MCF 10A (cell line): ENCODE measurements at regions of chr14 and their contacts with region 1.

Region 1: GRCh38 chr14:74618078-74618952 is 6.3 kb upstream of the LTBP2 start:
- DNase-seq: peak; percentile 92
- H3K4me3 Mint-ChIP-seq: no peak overlapping the region
- H3K27ac Mint-ChIP-seq: peak overlapping the region; percentile 39
- H3K4me1 Mint-ChIP-seq: peaks cover 71% of the 10 kb centered on the region
- H3K27me3 Mint-ChIP-seq: no peaks in the 10 kb centered on the region
- CTCF ChIP-seq: no peak

Region 2: GRCh38 chr14:74638066-74638465 is 19.8 kb after region 1 on chr14:
- CTCF ChIA-PET with region 1: interaction called, 3 read pairs
- POLR2A ChIA-PET with region 1: interaction called, 13 read pairs
- intact Hi-C with region 1: no loop called
- DNase-seq: no peak
- H3K4me3 Mint-ChIP-seq: no peak overlapping the region
- H3K27ac Mint-ChIP-seq: no peak overlapping the region
- H3K4me1 Mint-ChIP-seq: no peaks in the 10 kb centered on the region
- H3K27me3 Mint-ChIP-seq: no peaks in the 10 kb centered on the region
- CTCF ChIP-seq: no peak

Region 3: DNA sequence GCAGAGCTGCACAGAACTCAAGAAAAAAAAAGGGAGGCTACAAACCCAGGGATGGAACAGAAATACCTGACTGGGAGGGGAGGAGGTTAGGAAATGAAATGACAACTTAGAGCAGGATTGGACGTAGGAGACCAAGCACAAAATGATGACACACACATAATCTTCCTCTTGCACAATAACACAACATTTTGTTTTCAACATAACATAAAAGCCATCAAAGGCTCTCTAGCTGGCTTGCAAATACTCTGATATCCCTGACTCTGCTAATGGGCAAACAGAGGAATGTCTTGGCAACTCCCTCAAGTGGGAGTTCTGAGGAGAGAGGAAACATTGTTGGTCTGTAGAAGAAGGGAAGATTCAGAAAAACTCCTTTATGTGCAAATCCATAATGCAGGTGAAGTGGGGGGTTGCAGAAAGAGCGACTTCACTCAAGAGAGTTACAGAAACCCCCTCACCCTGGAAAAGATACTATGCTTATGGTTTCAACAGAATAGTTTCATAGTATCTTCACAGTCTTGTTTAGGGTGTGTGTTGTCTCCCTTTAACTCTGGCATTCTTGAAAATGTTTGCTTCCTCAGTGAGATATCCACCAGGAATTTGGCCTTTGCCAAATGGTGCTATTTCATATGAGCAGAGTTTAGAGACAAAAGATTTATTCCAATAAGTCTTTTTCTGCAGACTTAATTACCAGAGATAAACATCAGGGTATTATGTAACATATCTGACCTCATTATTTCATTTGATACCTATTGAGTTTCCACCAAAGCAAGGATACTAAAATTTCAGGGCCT is 37.5 kb after region 1 on chr14:
- CTCF ChIA-PET with region 1: interaction called, 13 read pairs
- POLR2A ChIA-PET with region 1: interaction called, 10 read pairs
- intact Hi-C with region 1: loop called (anchors 5 kb)
- DNase-seq: peak; percentile 83
- H3K4me3 Mint-ChIP-seq: no peak overlapping the region
- H3K27ac Mint-ChIP-seq: peak overlapping the region; percentile 75
- H3K4me1 Mint-ChIP-seq: peaks cover 25% of the 10 kb centered on the region
- H3K27me3 Mint-ChIP-seq: no peaks in the 10 kb centered on the region
- CTCF ChIP-seq: no peak

Region 4: GRCh38 chr14:74720526-74720925 is 102.2 kb after region 1 on chr14:
- CTCF ChIA-PET with region 1: no interaction called
- POLR2A ChIA-PET with region 1: no interaction called
- intact Hi-C with region 1: no loop called
- DNase-seq: no peak
- H3K4me3 Mint-ChIP-seq: no peak overlapping the region
- H3K27ac Mint-ChIP-seq: no peak overlapping the region
- H3K4me1 Mint-ChIP-seq: no peaks in the 10 kb centered on the region
- H3K27me3 Mint-ChIP-seq: no peaks in the 10 kb centered on the region
- CTCF ChIP-seq: no peak